A673 (cell line): ENCODE measurements at regions of chr10 and their contacts with region 1.

Region 1: DNA sequence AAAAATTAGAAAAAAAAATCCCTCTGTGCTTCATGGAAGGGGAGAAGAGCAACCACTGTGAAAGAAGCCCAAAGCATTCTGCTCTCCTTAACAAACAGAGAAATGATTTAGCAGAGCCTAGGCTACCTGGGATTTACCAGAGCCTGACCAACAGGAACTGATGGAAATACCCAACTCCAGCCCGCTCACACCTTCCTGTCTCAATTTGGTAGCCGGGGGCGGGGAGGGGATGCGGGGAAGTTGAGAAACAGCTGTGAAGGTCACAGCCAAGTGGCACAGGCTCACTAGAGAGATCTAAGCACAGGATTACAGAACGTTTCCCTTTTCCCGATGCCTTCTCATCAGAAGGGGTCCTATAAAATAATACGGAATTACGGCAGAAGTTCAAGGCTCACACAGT is 17.6 kb downstream of the RSU1 start:
- DNase-seq: no peak
- H3K4me3 ChIP-seq: no peak overlapping the region
- H3K27ac ChIP-seq: no peak overlapping the region
- H3K4me1 ChIP-seq: no peaks in the 10 kb centered on the region
- H3K27me3 ChIP-seq: no peaks in the 10 kb centered on the region
- CTCF ChIP-seq: no peak

Region 2: GRCh38 chr10:16436758-16437539 is 362.7 kb before region 1 on chr10 and contains the start of gene PTER:
- CTCF ChIA-PET with region 1: no interaction called
- POLR2A ChIA-PET with region 1: interaction called, 10 read pairs
- intact Hi-C with region 1: no loop called
- DNase-seq: peak; percentile 87
- H3K4me3 ChIP-seq: peak within 1 kb of the TSS; percentile 46
- H3K27ac ChIP-seq: peak within 1 kb of the TSS; percentile 30
- H3K4me1 ChIP-seq: no peaks in the 10 kb centered on the region
- H3K27me3 ChIP-seq: peaks cover 18% of the 10 kb centered on the region
- CTCF ChIP-seq: no peak
- total RNA-seq, gene PTER: 1.4 and 2.3 TPM in 2 replicates

Region 3: DNA sequence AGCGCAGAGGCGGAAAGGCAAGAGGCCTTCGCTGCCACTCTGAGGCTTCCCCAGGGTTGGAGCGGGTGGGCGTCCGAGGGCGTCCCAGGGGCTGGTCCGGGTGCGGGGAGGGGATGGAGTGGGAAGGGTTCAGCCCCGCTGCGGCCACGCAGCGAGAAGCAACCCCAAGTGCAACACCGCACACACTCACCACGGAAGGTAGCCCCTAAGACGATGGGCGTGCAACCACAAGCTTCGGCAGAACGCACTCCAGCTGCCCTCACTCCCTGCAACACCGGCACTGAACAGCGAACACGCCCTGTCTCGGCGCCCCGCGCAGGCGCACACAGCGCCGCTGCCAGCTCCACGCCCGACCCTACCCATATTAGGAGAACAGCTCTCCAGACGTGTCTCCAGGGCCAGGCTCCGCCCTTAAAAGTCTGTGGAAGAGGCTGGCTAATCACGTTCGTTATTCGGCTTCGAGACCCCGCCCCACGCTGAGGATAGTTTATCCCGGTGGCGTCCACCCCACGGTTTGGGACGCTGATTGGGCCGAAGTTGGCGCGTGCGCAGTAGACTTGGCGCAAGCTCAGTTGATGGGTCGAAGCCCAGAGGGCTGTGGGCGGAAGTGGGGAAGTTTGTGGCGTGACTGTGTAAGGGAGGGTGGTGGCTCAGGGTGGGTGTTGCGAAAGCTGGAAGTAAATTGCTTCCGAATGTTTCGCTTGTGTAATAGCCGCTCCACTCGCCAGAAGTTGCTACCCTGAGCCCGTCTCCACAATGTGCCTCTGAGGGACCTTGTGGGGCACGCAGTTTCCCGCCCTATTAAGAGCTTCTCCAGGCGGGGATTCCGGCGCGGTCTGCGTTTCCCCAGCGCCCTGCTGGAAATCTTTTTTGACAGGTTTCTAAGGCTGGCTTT is 17.8 kb after region 1 on chr10 and contains the start of gene RSU1:
- CTCF ChIA-PET with region 1: no interaction called
- POLR2A ChIA-PET with region 1: no interaction called
- intact Hi-C with region 1: no loop called
- DNase-seq: peak; percentile 100
- H3K4me3 ChIP-seq: peak within 1 kb of the TSS; percentile 80
- H3K27ac ChIP-seq: peak within 1 kb of the TSS; percentile 93
- H3K4me1 ChIP-seq: peaks cover 18% of the 10 kb centered on the region
- H3K27me3 ChIP-seq: no peaks in the 10 kb centered on the region
- CTCF ChIP-seq: no peak
- total RNA-seq, gene RSU1: 62.8 and 64.0 TPM in 2 replicates

Region 4: GRCh38 chr10:16843252-16843870 is 43.7 kb after region 1 on chr10:
- CTCF ChIA-PET with region 1: no interaction called
- POLR2A ChIA-PET with region 1: no interaction called
- intact Hi-C with region 1: no loop called
- DNase-seq: peak; percentile 90
- H3K4me3 ChIP-seq: no peak overlapping the region
- H3K27ac ChIP-seq: no peak overlapping the region
- H3K4me1 ChIP-seq: no peaks in the 10 kb centered on the region
- H3K27me3 ChIP-seq: no peaks in the 10 kb centered on the region
- CTCF ChIP-seq: peak; percentile 71

Region 5: DNA sequence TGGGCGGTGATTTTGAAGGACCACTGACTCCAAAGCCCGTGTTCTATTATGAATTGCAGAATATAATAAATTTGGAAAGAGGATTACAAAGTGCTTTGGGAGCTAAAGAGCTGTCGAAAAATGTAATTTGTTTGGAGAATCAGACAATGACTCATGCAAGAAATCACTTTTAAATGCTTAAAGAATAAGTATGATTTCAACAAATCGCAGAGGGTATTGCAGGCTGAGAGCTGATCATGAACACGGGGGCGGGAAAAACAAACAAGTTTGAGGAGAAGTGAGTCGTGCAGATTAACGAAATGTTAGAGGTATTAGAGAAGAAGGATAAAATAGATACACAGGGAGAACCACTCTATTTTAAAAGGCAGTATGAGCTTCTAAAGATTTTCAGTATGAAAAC is 822.4 kb after region 1 on chr10:
- CTCF ChIA-PET with region 1: no interaction called
- POLR2A ChIA-PET with region 1: no interaction called
- intact Hi-C with region 1: no loop called
- DNase-seq: no peak
- H3K4me3 ChIP-seq: no peak overlapping the region
- H3K27ac ChIP-seq: no peak overlapping the region
- H3K4me1 ChIP-seq: no peaks in the 10 kb centered on the region
- H3K27me3 ChIP-seq: no peaks in the 10 kb centered on the region
- CTCF ChIP-seq: no peak